ENCODE measurements at regions of chr7 and their contacts with region 1.

Region 1: GRCh38 chr7:121395961-121396757 is at the start of gene FAM3C:
- DNase-seq: peak; percentile 77
- H3K4me3 Mint-ChIP-seq: peak within 1 kb of the TSS; percentile 85
- H3K27ac Mint-ChIP-seq: peak within 1 kb of the TSS; percentile 82
- H3K4me1 Mint-ChIP-seq: peaks cover 28% of the 10 kb centered on the region
- H3K27me3 Mint-ChIP-seq: no peaks in the 10 kb centered on the region

Region 2: DNA sequence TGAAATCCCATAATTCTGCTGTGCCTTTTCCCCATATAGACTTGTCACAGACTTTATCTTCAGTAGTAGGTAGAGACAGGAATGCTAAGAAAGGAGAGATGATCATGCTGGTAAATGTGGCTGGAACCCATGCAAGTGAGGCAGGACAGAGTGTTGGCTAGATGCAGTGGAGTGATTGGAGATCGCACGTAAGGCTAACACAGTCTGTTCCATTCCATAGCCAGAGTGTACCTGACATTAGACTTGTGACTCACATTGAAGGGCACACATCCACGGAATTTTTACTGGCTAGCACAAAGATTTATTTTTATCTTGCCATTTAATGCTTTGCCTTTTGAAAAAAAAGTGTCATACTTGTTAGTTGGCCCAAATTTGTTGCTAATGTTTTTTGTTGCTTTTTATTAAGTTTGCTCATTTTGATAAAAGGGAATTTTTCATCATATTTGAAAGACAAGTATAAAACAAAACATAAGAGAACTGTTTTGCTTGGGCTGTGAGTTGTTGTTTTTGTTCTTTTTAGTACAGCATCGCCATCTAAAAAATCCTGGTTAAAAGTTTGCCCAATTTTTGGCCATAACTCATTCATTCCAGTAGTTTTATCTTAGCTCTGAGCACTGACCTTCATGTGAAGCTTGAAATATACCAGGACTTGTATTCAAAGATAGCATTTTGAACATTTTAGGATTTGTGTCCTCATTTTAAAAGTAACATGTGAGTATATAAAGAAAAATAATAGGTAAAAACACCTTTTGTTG is 326.6 kb before region 1 on chr7:
- CTCF ChIA-PET with region 1: no interaction called
- DNase-seq: no peak
- H3K4me3 Mint-ChIP-seq: no peak overlapping the region
- H3K27ac Mint-ChIP-seq: no peak overlapping the region
- H3K4me1 Mint-ChIP-seq: no peaks in the 10 kb centered on the region
- H3K27me3 Mint-ChIP-seq: no peaks in the 10 kb centered on the region

Region 3: GRCh38 chr7:121379930-121380329 is 16.2 kb before region 1 on chr7:
- CTCF ChIA-PET with region 1: interaction called, 16 read pairs
- DNase-seq: no peak
- H3K4me3 Mint-ChIP-seq: no peak overlapping the region
- H3K27ac Mint-ChIP-seq: no peak overlapping the region
- H3K4me1 Mint-ChIP-seq: peaks cover 14% of the 10 kb centered on the region
- H3K27me3 Mint-ChIP-seq: no peaks in the 10 kb centered on the region

Region 4: GRCh38 chr7:121385800-121386179 is 10.4 kb before region 1 on chr7:
- CTCF ChIA-PET with region 1: interaction called, 16 read pairs
- DNase-seq: no peak
- H3K4me3 Mint-ChIP-seq: no peak overlapping the region
- H3K27ac Mint-ChIP-seq: no peak overlapping the region
- H3K4me1 Mint-ChIP-seq: peaks cover 40% of the 10 kb centered on the region
- H3K27me3 Mint-ChIP-seq: no peaks in the 10 kb centered on the region

Region 5: GRCh38 chr7:121475806-121476205 is 79.6 kb after region 1 on chr7:
- CTCF ChIA-PET with region 1: no interaction called
- DNase-seq: no peak
- H3K4me3 Mint-ChIP-seq: no peak overlapping the region
- H3K27ac Mint-ChIP-seq: no peak overlapping the region
- H3K4me1 Mint-ChIP-seq: no peaks in the 10 kb centered on the region
- H3K27me3 Mint-ChIP-seq: no peaks in the 10 kb centered on the region

Region 6: DNA sequence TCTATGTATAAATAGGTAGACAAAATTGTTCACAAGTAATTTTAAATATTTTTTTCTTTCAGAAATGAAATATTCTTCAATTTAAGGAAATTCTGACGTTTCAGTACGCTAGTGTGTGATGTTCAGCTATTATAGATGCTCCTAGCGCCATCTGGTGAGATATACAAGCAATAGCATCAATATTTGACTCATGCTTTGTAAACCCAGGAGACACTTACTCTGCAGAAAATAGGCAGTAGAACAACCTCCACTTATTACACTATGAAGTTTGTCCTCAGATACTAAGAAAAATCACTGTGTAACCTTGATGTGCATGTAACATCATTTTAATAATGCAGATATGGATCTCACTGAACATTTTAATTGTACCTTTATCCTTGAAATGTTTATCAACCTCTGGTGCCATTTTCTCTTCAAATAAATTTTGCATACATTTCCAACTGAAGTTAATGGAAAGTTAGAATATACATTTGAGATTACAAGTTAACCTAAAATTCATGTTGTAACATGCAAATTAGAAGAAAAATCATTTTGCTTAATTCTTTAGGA is 151.5 kb after region 1 on chr7:
- CTCF ChIA-PET with region 1: interaction called, 21 read pairs
- DNase-seq: no peak
- H3K4me3 Mint-ChIP-seq: no peak overlapping the region
- H3K27ac Mint-ChIP-seq: no peak overlapping the region
- H3K4me1 Mint-ChIP-seq: peaks cover 33% of the 10 kb centered on the region
- H3K27me3 Mint-ChIP-seq: peaks cover 6% of the 10 kb centered on the region